ENCODE measurements at regions of chr16 and their contacts with region 1.

Region 1: GRCh38 chr16:67935402-67936123 is 1.1 kb downstream of the PSMB10 start:
- DNase-seq: peak; percentile 98
- H3K4me3 Mint-ChIP-seq: peak overlapping the region; percentile 100
- H3K27ac Mint-ChIP-seq: peak overlapping the region; percentile 94
- H3K4me1 Mint-ChIP-seq: peaks cover 41% of the 10 kb centered on the region
- H3K27me3 Mint-ChIP-seq: no peaks in the 10 kb centered on the region

Region 2: GRCh38 chr16:67521095-67521804 is 414.3 kb before region 1 on chr16:
- CTCF ChIA-PET with region 1: interaction called, 4 read pairs
- intact Hi-C with region 1: loop called (anchors 1 kb)
- DNase-seq: peak; percentile 100
- H3K4me3 Mint-ChIP-seq: peak overlapping the region; percentile 84
- H3K27ac Mint-ChIP-seq: peak overlapping the region; percentile 96
- H3K4me1 Mint-ChIP-seq: peaks cover 11% of the 10 kb centered on the region
- H3K27me3 Mint-ChIP-seq: no peaks in the 10 kb centered on the region

Region 3: GRCh38 chr16:67806428-67807147 is 129.0 kb before region 1 on chr16 and contains the starts of genes RANBP10 and TSNAXIP1:
- CTCF ChIA-PET with region 1: no interaction called
- intact Hi-C with region 1: loop called (anchors 5 kb)
- DNase-seq: peak; percentile 98
- H3K4me3 Mint-ChIP-seq: peak within 1 kb of the TSS; percentile 86
- H3K27ac Mint-ChIP-seq: peak within 1 kb of the TSS; percentile 81
- H3K4me1 Mint-ChIP-seq: peaks cover 36% of the 10 kb centered on the region
- H3K27me3 Mint-ChIP-seq: no peaks in the 10 kb centered on the region
- total RNA-seq, gene RANBP10: 12.4 to 16.1 TPM
- total RNA-seq, gene TSNAXIP1: 0.35 to 0.50 TPM

Region 4: GRCh38 chr16:67883872-67884261 is 51.7 kb before region 1 on chr16:
- CTCF ChIA-PET with region 1: interaction called, 23 read pairs
- intact Hi-C with region 1: no loop called
- DNase-seq: peak; percentile 76
- H3K4me3 Mint-ChIP-seq: no peak overlapping the region
- H3K27ac Mint-ChIP-seq: no peak overlapping the region
- H3K4me1 Mint-ChIP-seq: no peaks in the 10 kb centered on the region
- H3K27me3 Mint-ChIP-seq: no peaks in the 10 kb centered on the region

Region 5: GRCh38 chr16:67968400-67969253 is 33.1 kb after region 1 on chr16 and contains the start of gene SLC12A4:
- CTCF ChIA-PET with region 1: no interaction called
- intact Hi-C with region 1: loop called (anchors 1 kb)
- DNase-seq: peak; percentile 93
- H3K4me3 Mint-ChIP-seq: peak within 1 kb of the TSS; percentile 97
- H3K27ac Mint-ChIP-seq: peak within 1 kb of the TSS; percentile 78
- H3K4me1 Mint-ChIP-seq: peaks cover 10% of the 10 kb centered on the region
- H3K27me3 Mint-ChIP-seq: no peaks in the 10 kb centered on the region
- total RNA-seq, gene SLC12A4: 24.3 to 28.9 TPM

Region 6: GRCh38 chr16:68022704-68023522 is 87.3 kb after region 1 on chr16 and contains the starts of genes DDX28 and DUS2:
- CTCF ChIA-PET with region 1: no interaction called
- intact Hi-C with region 1: loop called (anchors 2 kb)
- DNase-seq: peak; percentile 96
- H3K4me3 Mint-ChIP-seq: peak within 1 kb of the TSS; percentile 99
- H3K27ac Mint-ChIP-seq: peak within 1 kb of the TSS; percentile 94
- H3K4me1 Mint-ChIP-seq: peaks cover 38% of the 10 kb centered on the region
- H3K27me3 Mint-ChIP-seq: no peaks in the 10 kb centered on the region
- total RNA-seq, gene DDX28: 9.4 to 9.7 TPM
- total RNA-seq, gene DUS2: 22.9 to 25.2 TPM

Region 7: GRCh38 chr16:68229431-68230198 is 294.1 kb after region 1 on chr16:
- CTCF ChIA-PET with region 1: no interaction called
- intact Hi-C with region 1: loop called (anchors 2 kb)
- DNase-seq: peak; percentile 64
- H3K4me3 Mint-ChIP-seq: no peak overlapping the region
- H3K27ac Mint-ChIP-seq: peak overlapping the region; percentile 53
- H3K4me1 Mint-ChIP-seq: peaks cover 42% of the 10 kb centered on the region
- H3K27me3 Mint-ChIP-seq: no peaks in the 10 kb centered on the region

Measured in activated naive CD4-positive, alpha-beta T cell treated with anti-CD3 and anti-CD28 coated beads for 36 hours (primary cell).